ENCODE measurements at regions of chr2 and their contacts with region 1.

Region 1: DNA sequence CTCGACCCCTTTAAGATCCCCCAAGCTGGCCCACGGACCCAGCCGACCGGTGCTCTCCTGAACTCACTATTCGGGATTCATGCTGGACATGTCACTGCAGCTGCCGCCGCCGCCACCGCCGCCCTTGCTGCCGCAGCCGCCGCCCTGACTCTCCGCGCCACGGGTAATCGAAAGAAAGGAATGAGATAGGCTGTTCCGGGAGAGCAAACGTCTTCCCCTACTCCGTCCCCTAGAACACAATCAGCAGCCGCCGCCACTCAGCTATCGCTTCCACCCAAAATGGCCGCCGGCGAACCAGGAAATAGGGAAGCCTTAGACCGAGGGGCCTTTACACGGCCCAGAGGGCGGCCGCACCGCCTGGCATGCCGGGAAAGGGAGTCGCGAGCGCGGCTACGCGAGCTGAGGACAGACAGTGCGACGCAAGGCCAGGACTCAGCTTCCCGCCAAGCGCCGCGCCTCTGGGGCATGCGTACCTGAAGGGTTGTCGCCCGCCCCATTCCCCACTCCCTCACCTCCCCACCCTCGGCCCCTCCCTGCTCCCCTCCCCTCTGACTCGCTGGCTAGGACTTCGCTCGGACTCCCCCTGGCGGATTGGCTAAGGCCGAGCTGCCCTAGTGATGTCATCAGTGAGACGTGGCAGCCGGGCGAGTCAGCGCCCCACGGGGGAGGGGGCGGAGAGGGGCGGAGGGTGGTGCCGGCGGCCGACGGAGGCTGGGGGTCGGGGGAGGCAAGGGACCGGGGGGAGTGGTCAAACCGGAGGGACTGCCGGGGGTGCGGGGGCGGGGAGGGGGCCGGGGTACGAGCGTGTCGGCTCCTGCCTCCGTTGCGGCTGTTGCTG is at the start of gene RAB1A:
- DNase-seq: peak; percentile 99
- ATAC-seq: peak; percentile 95
- H3K4me3 Mint-ChIP-seq: peak within 1 kb of the TSS; percentile 100
- H3K27ac Mint-ChIP-seq: peak within 1 kb of the TSS; percentile 100
- H3K4me1 Mint-ChIP-seq: peaks cover 35% of the 10 kb centered on the region
- H3K27me3 Mint-ChIP-seq: no peaks in the 10 kb centered on the region
- CTCF ChIP-seq: no peak
- total RNA-seq, gene RAB1A: 71.8 to 75.8 TPM

Region 2: GRCh38 chr2:65116645-65117044 is 13.4 kb before region 1 on chr2:
- CTCF ChIA-PET with region 1: interaction called, 4 read pairs
- POLR2A ChIA-PET with region 1: interaction called, 11 read pairs
- intact Hi-C with region 1: no loop called
- DNase-seq: no peak
- ATAC-seq: no peak
- H3K4me3 Mint-ChIP-seq: no peak overlapping the region
- H3K27ac Mint-ChIP-seq: no peak overlapping the region
- H3K4me1 Mint-ChIP-seq: peaks cover 49% of the 10 kb centered on the region
- H3K27me3 Mint-ChIP-seq: no peaks in the 10 kb centered on the region
- CTCF ChIP-seq: no peak

Region 3: DNA sequence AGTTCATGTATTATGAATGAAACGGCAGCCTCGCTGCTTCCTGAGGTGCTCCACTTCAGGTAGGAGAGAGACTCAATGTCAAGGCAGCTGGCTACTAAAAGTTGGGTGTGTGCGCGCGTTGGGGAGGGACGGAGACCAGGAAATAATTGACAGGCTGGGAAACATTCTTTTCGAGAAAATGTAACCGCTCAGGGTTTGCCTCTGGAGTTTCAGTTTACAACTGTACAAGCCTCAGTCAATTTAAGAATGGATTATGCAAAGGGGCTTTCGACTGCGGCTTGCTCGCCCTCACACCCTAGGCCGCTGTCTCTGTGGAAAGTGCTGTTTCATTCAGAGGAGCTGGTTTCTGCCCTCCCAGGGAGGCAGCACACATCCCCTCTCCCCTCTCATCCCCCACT is 306.8 kb after region 1 on chr2:
- CTCF ChIA-PET with region 1: no interaction called
- POLR2A ChIA-PET with region 1: no interaction called
- intact Hi-C with region 1: no loop called
- DNase-seq: peak; percentile 77
- ATAC-seq: peak; percentile 53
- H3K4me3 Mint-ChIP-seq: peak overlapping the region; percentile 81
- H3K27ac Mint-ChIP-seq: peak overlapping the region; percentile 34
- H3K4me1 Mint-ChIP-seq: peaks cover 18% of the 10 kb centered on the region
- H3K27me3 Mint-ChIP-seq: peaks cover 51% of the 10 kb centered on the region
- CTCF ChIP-seq: no peak

Region 4: GRCh38 chr2:65545837-65546805 is 416.1 kb after region 1 on chr2:
- CTCF ChIA-PET with region 1: no interaction called
- POLR2A ChIA-PET with region 1: no interaction called
- intact Hi-C with region 1: no loop called
- DNase-seq: no peak
- ATAC-seq: no peak
- H3K4me3 Mint-ChIP-seq: no peak overlapping the region
- H3K27ac Mint-ChIP-seq: no peak overlapping the region
- H3K4me1 Mint-ChIP-seq: peaks cover 13% of the 10 kb centered on the region
- H3K27me3 Mint-ChIP-seq: no peaks in the 10 kb centered on the region
- CTCF ChIP-seq: no peak

Region 5: DNA sequence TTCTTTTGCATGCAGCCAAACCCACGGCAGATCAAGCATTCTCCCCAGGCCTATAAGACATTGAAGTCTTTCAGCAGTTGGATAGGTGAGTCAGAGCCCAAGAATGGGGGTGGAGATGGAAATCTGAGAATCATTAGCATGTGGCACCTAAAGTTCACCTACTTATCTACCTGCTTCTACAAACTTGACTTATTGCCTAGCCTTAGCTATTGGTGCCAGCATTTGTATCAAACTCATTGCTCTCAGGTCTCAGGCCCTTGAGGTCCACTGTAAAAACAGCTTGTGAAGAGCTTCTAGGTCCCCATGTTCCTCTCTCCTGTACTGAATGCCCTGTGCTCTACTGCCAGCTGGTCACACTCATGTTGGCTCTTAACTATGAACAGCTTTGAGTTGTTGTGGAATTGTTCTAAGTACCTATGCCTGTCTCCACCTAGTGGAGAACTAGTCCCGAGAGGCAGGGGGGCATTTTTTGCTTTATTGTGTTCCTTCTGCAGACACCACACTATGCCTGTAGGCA is 580.8 kb after region 1 on chr2:
- CTCF ChIA-PET with region 1: no interaction called
- POLR2A ChIA-PET with region 1: no interaction called
- intact Hi-C with region 1: no loop called
- DNase-seq: no peak
- ATAC-seq: no peak
- H3K4me3 Mint-ChIP-seq: no peak overlapping the region
- H3K27ac Mint-ChIP-seq: no peak overlapping the region
- H3K4me1 Mint-ChIP-seq: no peaks in the 10 kb centered on the region
- H3K27me3 Mint-ChIP-seq: peaks cover 12% of the 10 kb centered on the region
- CTCF ChIP-seq: no peak

Measured in activated CD8-positive, alpha-beta T cell treated with anti-CD3 and anti-CD28 coated beads for 36 hours (primary cell).